ENCODE measurements at regions of chr20 and their contacts with region 1.

Region 1: GRCh38 chr20:34516247-34517113 is at the start of gene DYNLRB1:
- DNase-seq: peak; percentile 97
- H3K4me3 Mint-ChIP-seq: peak within 1 kb of the TSS; percentile 97
- H3K27ac Mint-ChIP-seq: peak within 1 kb of the TSS; percentile 99
- H3K4me1 Mint-ChIP-seq: peaks cover 15% of the 10 kb centered on the region
- H3K27me3 Mint-ChIP-seq: no peaks in the 10 kb centered on the region
- CTCF ChIP-seq: no peak
- total RNA-seq, gene DYNLRB1: 127 and 145 TPM in 2 replicates

Region 2: GRCh38 chr20:32727683-32728082 is 1788.8 kb before region 1 on chr20:
- CTCF ChIA-PET with region 1: no interaction called
- POLR2A ChIA-PET with region 1: no interaction called
- intact Hi-C with region 1: no loop called
- DNase-seq: peak; percentile 42
- H3K4me3 Mint-ChIP-seq: no peak overlapping the region
- H3K27ac Mint-ChIP-seq: no peak overlapping the region
- H3K4me1 Mint-ChIP-seq: peaks cover 23% of the 10 kb centered on the region
- H3K27me3 Mint-ChIP-seq: no peaks in the 10 kb centered on the region
- CTCF ChIP-seq: no peak

Region 3: DNA sequence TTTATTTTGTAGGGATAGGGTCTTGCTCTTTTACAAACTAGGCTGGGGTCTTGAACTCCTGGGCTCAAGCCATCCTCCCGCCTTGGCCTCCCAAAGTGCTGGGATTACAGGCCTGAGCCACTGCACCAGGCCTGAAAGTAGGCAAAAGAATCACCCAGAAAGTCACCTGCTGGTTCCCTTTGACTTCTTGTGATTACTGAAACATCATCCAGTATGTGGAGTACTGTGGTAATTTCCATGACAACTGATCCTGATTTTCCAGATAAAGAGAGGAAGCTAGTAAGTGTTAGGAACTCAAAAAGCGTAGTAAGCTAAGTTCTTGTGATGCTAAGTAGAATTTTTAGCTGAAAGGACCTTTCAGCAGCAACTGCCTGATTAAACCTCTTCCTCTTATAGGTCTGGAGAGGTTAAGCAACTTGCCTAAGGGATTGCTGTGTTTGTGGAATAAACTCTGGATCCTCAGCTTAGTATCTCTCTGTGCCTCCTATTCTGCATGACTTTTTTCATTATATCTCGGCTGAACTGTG is 506.0 kb before region 1 on chr20:
- CTCF ChIA-PET with region 1: no interaction called
- POLR2A ChIA-PET with region 1: no interaction called
- intact Hi-C with region 1: no loop called
- DNase-seq: no peak
- H3K4me3 Mint-ChIP-seq: no peak overlapping the region
- H3K27ac Mint-ChIP-seq: no peak overlapping the region
- H3K4me1 Mint-ChIP-seq: peaks cover 12% of the 10 kb centered on the region
- H3K27me3 Mint-ChIP-seq: no peaks in the 10 kb centered on the region
- CTCF ChIP-seq: no peak

Region 4: GRCh38 chr20:34302723-34303528 is 213.6 kb before region 1 on chr20 and contains the start of gene AHCY:
- CTCF ChIA-PET with region 1: no interaction called
- POLR2A ChIA-PET with region 1: interaction called, 45 read pairs
- intact Hi-C with region 1: no loop called
- DNase-seq: peak; percentile 98
- H3K4me3 Mint-ChIP-seq: no peak within 1 kb of the TSS
- H3K27ac Mint-ChIP-seq: peak within 1 kb of the TSS; percentile 83
- H3K4me1 Mint-ChIP-seq: no peaks in the 10 kb centered on the region
- H3K27me3 Mint-ChIP-seq: no peaks in the 10 kb centered on the region
- CTCF ChIP-seq: no peak
- total RNA-seq, gene AHCY: 101 and 175 TPM in 2 replicates

Region 5: GRCh38 chr20:34506480-34506879 is 10.0 kb before region 1 on chr20:
- CTCF ChIA-PET with region 1: interaction called, 6 read pairs
- POLR2A ChIA-PET with region 1: interaction called, 41 read pairs
- intact Hi-C with region 1: no loop called
- DNase-seq: no peak
- H3K4me3 Mint-ChIP-seq: no peak overlapping the region
- H3K27ac Mint-ChIP-seq: no peak overlapping the region
- H3K4me1 Mint-ChIP-seq: no peaks in the 10 kb centered on the region
- H3K27me3 Mint-ChIP-seq: no peaks in the 10 kb centered on the region
- CTCF ChIP-seq: no peak

Region 6: DNA sequence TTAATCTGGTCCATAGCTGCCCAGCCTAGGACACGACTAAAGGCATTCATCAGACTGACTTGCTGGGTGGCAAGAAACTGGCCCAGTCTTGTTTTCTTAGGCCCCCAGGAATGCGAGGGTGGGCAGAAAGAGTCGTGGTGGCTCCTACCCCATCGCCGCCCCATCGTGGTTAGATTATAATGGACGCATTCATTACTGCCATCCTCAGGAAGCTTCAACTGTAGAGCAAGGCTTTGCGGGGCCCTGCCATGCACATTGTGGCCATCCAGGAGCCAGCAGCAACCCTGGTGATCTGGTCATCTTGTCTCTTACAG is 15.9 kb after region 1 on chr20:
- CTCF ChIA-PET with region 1: interaction called, 9 read pairs
- POLR2A ChIA-PET with region 1: interaction called, 205 read pairs
- intact Hi-C with region 1: no loop called
- DNase-seq: no peak
- H3K4me3 Mint-ChIP-seq: no peak overlapping the region
- H3K27ac Mint-ChIP-seq: no peak overlapping the region
- H3K4me1 Mint-ChIP-seq: peaks cover 7% of the 10 kb centered on the region
- H3K27me3 Mint-ChIP-seq: no peaks in the 10 kb centered on the region
- CTCF ChIP-seq: no peak

Region 7: GRCh38 chr20:34558320-34559218 is 42.1 kb after region 1 on chr20 and contains the start of gene MAP1LC3A:
- CTCF ChIA-PET with region 1: no interaction called
- POLR2A ChIA-PET with region 1: interaction called, 11 read pairs
- intact Hi-C with region 1: no loop called
- DNase-seq: peak; percentile 79
- H3K4me3 Mint-ChIP-seq: peak within 1 kb of the TSS; percentile 91
- H3K27ac Mint-ChIP-seq: peak within 1 kb of the TSS; percentile 85
- H3K4me1 Mint-ChIP-seq: peaks cover 21% of the 10 kb centered on the region
- H3K27me3 Mint-ChIP-seq: no peaks in the 10 kb centered on the region
- CTCF ChIP-seq: no peak
- total RNA-seq, gene MAP1LC3A: 10.5 and 10.7 TPM in 2 replicates

Region 8: GRCh38 chr20:34585019-34585418 is 68.5 kb after region 1 on chr20:
- CTCF ChIA-PET with region 1: no interaction called
- POLR2A ChIA-PET with region 1: no interaction called
- intact Hi-C with region 1: no loop called
- DNase-seq: no peak
- H3K4me3 Mint-ChIP-seq: no peak overlapping the region
- H3K27ac Mint-ChIP-seq: no peak overlapping the region
- H3K4me1 Mint-ChIP-seq: no peaks in the 10 kb centered on the region
- H3K27me3 Mint-ChIP-seq: no peaks in the 10 kb centered on the region
- CTCF ChIP-seq: no peak

Region 9: DNA sequence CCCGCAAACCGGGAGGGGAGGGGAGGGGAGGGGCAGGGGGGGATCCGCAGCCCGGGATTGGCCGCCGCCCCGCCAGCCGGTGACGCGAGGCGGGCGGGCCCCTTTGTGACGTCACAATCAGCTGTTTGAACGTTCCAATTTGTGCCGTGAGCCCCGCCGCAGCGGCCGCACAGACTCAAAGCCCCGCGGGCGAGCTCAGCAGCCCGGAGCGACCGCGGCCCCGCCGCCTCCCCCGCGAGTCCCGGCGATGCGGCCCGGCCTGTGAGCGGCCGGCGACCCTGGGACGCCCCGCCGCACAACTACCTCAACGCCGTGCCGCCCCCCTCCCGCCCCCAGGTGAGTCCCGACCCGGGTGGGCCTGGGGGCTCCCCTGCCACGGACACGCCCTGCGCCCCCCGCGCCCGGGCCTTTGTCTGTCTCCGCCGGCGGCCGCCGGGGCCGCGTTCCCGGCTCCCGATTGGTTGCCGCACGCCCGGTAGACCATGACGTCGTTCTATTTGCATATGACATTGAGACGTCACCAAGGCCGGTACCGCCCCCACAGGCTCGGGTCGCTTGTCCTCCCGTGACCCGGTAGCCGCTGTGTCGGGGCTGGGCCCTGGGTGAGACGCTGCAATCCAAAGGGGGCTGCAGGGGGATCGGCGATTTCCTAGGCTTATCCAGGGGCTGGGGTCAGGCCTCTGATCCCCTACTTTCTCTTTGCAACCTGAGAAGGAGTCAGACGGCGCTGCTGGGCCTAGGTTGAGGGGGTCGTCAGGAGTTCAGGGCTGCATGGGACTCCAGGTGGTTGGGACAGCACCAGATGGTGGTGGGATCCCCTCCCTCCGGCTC is 187.9 kb after region 1 on chr20 and contains the start of gene TP53INP2:
- CTCF ChIA-PET with region 1: no interaction called
- POLR2A ChIA-PET with region 1: interaction called, 19 read pairs
- intact Hi-C with region 1: no loop called
- DNase-seq: peak; percentile 76
- H3K4me3 Mint-ChIP-seq: peak within 1 kb of the TSS; percentile 95
- H3K27ac Mint-ChIP-seq: peak within 1 kb of the TSS; percentile 77
- H3K4me1 Mint-ChIP-seq: peaks cover 8% of the 10 kb centered on the region
- H3K27me3 Mint-ChIP-seq: no peaks in the 10 kb centered on the region
- CTCF ChIP-seq: no peak
- total RNA-seq, gene TP53INP2: 1.8 and 3.6 TPM in 2 replicates